ENCODE measurements at regions of chr11 and their contacts with region 1.

Region 1: DNA sequence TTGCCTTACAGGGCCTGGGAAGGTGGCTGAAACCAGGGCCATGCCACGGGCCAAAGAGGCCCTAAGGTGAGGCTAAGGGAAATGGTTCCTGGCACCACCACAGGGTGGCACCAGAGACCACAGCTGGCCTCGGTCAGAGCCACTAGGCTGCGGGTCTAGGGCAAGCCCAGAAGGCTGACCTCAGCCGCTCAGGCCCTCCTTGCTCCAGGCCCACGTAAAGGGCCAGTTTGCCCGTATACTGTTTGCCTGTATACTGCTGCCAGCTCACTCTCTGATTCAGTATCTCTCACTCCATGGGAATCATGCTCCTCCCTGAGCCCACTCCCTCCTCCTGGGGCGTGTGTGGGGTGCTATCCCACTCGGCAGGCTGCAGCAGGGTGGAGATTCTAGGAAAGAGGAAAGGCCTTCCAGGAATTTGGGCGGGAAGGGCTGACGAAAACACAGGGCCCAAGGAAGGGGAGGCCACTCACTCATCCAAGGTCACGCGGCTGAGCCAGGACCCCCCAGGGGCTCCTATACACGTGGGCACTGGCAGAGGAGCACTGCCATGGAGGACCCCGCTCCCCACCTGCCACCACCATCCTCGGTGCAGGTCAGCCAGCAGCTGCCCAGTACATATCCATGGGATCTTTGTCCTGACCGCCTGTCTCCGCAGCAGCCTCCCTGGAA is 62.4 kb downstream of the NECTIN1 start:
- DNase-seq: peak; percentile 66 to 71
- H3K4me3 ChIP-seq: no peak overlapping the region
- H3K27ac ChIP-seq: no peak overlapping the region
- H3K4me1 ChIP-seq: peaks cover 0 to 3% of the 10 kb centered on the region in 2 donors
- H3K27me3 ChIP-seq: no peaks in the 10 kb centered on the region
- CTCF ChIP-seq: peak; percentile 55 to 91 (median 82)
- POLR2A ChIP-seq: no peak

Region 2: GRCh38 chr11:119584193-119585037 is 82.2 kb before region 1 on chr11:
- intact Hi-C with region 1: no loop called
- DNase-seq: peak; percentile 81 to 82
- H3K4me3 ChIP-seq: peak overlapping the region in 2 of 3 donors; percentile 24 to 40
- H3K27ac ChIP-seq: peak overlapping the region in 1 of 3 donors; percentile 41
- H3K4me1 ChIP-seq: peaks cover 14 to 16% of the 10 kb centered on the region in 2 donors
- H3K27me3 ChIP-seq: no peaks in the 10 kb centered on the region
- CTCF ChIP-seq: no peak
- POLR2A ChIP-seq: no peak

Region 3: GRCh38 chr11:119728651-119729580 is 62.3 kb after region 1 on chr11 and contains the start of gene NECTIN1:
- intact Hi-C with region 1: loop called (anchors 5 kb)
- DNase-seq: peak; percentile 84 to 87
- H3K4me3 ChIP-seq: peak within 1 kb of the TSS; percentile 66 to 87 (median 70)
- H3K27ac ChIP-seq: peak within 1 kb of the TSS in 2 of 3 donors; percentile 69 to 89
- H3K4me1 ChIP-seq: peaks cover 19 to 27% of the 10 kb centered on the region in 2 donors
- H3K27me3 ChIP-seq: no peaks in the 10 kb centered on the region
- CTCF ChIP-seq: peak; percentile 51 to 98 (median 85)
- POLR2A ChIP-seq: peak; percentile 8 to 97
- total RNA-seq, gene NECTIN1: 0.94 to 5.3 (median 2.3) TPM

Region 4: GRCh38 chr11:119741369-119742262 is 75.0 kb after region 1 on chr11:
- intact Hi-C with region 1: loop called (anchors 5 kb)
- DNase-seq: peak; percentile 34 to 35
- H3K4me3 ChIP-seq: no peak overlapping the region
- H3K27ac ChIP-seq: no peak overlapping the region
- H3K4me1 ChIP-seq: peaks cover 7 to 9% of the 10 kb centered on the region in 2 donors
- H3K27me3 ChIP-seq: no peaks in the 10 kb centered on the region
- CTCF ChIP-seq: peak; percentile 33 to 86 (median 60)
- POLR2A ChIP-seq: no peak

Region 5: DNA sequence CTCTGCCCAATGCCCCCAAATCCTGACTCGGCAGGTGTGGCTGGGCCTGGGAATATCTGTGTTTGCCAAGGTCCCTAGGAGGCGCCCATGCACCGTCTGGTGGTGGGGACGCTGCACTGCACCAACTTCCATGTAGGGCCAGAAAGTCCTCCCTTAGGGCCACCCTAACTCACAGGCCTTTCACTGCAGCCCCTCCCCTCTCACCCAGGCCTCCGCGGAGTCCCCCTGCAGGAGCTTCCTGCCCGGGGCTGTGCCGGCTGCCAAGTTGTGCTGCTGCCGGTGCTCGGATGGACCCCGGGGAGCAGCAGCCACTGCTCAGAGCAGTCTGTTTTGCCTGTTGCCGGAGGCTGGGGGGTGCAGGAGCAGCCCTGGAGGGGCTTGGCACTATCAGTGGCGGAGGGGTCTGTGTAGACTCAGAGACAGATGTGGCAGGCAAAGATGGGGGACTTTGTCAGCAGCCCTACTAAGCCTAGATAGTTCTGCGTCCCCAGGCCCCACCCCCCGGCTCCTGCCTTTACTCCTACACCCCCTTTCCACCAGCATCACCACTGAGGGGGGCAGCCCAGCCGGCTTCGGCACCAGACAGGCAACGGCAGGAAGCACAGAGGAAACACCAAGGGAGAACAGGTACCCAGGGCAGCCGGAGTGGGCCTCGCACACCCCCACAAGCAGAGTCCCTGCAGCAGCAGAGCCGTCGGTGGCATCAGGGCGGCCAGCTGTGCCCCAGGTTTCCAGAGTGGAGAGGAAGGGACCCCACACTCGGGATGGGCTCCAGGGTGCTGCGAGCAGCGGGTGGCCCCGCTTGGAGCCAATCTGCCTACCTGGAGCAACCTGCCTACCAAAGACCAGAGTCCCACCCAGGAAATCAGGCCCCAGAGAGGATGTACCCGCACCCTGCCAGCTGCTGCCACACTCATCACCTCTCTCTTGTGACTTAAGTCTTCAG is 347.0 kb after region 1 on chr11:
- intact Hi-C with region 1: loop called (anchors 10 kb)
- DNase-seq: peak; percentile 28 to 34
- H3K4me3 ChIP-seq: no peak overlapping the region
- H3K27ac ChIP-seq: no peak overlapping the region
- H3K4me1 ChIP-seq: no peaks in the 10 kb centered on the region
- H3K27me3 ChIP-seq: no peaks in the 10 kb centered on the region
- CTCF ChIP-seq: peak in 4 of 6 experiments; percentile 13 to 49 (median 34)
- POLR2A ChIP-seq: no peak

Region 6: DNA sequence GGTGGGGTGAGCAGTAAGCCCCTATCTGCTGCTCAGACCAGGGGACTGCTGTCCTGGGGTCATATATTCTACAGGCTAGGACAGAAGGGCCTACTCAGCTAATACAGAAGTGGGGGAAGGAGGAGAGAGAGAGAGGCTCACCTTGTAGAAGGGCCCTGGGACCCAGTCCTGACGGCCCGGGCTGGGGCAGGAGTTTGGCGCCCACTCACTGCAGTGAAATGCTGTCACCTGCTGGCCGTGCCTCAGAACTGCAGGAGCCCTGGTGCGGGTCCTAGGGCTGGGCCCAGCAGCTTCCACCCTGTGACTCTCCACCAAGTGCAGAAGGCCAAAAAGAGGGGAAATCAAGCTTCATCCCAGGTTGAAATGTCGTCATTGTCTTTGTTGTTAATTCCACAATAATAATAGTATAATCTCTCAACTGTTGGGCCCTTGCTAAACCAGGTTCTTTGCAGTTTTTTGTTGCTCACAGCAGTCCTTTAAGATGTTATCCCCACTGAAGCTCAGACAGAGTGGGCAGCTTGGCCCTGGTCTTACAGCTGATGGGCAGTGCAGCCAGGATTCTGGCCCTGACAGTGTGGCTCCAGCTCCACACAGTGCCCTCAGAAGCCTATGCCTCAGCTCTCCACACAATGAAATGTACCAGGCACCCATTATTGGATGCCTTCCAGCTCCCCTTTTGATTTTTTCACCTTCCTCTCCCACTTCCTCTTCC is 441.7 kb after region 1 on chr11:
- intact Hi-C with region 1: loop called (anchors 5 kb)
- DNase-seq: peak; percentile 60 to 63
- H3K4me3 ChIP-seq: no peak overlapping the region
- H3K27ac ChIP-seq: no peak overlapping the region
- H3K4me1 ChIP-seq: no peaks in the 10 kb centered on the region
- H3K27me3 ChIP-seq: no peaks in the 10 kb centered on the region
- CTCF ChIP-seq: peak; percentile 95 to 99 (median 96)
- POLR2A ChIP-seq: no peak

Measured in thyroid gland (tissue), 4 donors.